Endothelial cell of umbilical vein (primary cell): ENCODE measurements at regions of chr14 and their contacts with region 1.

Region 1: DNA sequence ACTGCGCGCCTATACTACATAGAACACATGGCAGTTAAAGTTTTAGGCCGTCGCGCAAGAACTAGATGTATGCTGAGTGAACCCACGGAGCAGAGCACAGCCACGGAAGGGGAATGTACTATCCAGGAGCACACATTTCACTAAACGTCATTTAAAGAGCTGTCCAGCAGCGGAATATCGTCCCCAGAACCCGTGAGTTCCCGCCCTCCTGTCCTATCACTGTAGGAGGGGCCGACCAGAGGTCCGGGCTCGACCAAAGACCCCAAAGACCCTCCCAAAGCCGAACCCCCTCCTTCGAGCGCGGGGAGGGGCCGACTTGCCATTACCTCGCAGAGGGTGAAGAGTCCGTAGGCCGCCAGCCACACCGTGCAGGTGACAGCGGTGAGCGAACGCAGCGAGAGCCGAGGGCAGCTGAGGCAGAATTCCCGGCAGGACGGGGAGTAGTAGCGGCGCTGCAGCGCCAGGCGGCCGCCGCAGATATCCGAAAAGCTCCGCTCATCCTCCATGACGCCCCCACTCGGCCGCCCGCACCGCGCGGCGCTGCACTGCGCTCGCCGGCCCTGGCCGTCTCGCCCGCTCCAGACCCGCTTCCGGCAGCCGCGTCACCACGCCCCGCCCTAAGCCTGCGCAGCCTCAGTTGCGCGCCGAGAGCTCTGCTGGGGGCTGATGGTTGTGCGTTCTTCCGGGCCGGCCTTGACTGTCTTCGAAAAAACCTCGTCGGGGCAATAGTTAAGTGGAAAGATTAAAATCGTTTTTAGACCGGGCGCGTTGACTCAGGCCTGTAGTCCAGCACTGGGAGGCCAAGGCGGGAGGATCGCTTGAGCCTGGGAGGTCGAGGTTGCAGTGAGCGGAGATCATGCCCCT is at the start of gene PIGH:
- DNase-seq: peak; percentile 88
- H3K4me3 ChIP-seq: peak within 1 kb of the TSS; percentile 33 to 60 (median 54)
- H3K27ac ChIP-seq: no peak within 1 kb of the TSS
- H3K4me1 ChIP-seq: peaks cover 6% of the 10 kb centered on the region
- H3K27me3 ChIP-seq: peaks cover 0 to 4% of the 10 kb centered on the region in 2 experiments
- CTCF ChIP-seq: peak; percentile 41 to 80
- POLR2A ChIP-seq: peak; percentile 80
- total RNA-seq, gene PIGH: 9.9 and 12.3 TPM in 2 replicates

Region 2: GRCh38 chr14:67508956-67509355 is 91.0 kb before region 1 on chr14:
- CTCF ChIA-PET with region 1: no interaction called
- POLR2A ChIA-PET with region 1: no interaction called
- dilution Hi-C with region 1: no loop called
- intact Hi-C with region 1: no loop called
- DNase-seq: no peak
- H3K4me3 ChIP-seq: no peak overlapping the region
- H3K27ac ChIP-seq: no peak overlapping the region
- H3K4me1 ChIP-seq: no peaks in the 10 kb centered on the region
- H3K27me3 ChIP-seq: peaks cover 8 to 27% of the 10 kb centered on the region in 2 experiments
- CTCF ChIP-seq: no peak
- POLR2A ChIP-seq: no peak

Region 3: DNA sequence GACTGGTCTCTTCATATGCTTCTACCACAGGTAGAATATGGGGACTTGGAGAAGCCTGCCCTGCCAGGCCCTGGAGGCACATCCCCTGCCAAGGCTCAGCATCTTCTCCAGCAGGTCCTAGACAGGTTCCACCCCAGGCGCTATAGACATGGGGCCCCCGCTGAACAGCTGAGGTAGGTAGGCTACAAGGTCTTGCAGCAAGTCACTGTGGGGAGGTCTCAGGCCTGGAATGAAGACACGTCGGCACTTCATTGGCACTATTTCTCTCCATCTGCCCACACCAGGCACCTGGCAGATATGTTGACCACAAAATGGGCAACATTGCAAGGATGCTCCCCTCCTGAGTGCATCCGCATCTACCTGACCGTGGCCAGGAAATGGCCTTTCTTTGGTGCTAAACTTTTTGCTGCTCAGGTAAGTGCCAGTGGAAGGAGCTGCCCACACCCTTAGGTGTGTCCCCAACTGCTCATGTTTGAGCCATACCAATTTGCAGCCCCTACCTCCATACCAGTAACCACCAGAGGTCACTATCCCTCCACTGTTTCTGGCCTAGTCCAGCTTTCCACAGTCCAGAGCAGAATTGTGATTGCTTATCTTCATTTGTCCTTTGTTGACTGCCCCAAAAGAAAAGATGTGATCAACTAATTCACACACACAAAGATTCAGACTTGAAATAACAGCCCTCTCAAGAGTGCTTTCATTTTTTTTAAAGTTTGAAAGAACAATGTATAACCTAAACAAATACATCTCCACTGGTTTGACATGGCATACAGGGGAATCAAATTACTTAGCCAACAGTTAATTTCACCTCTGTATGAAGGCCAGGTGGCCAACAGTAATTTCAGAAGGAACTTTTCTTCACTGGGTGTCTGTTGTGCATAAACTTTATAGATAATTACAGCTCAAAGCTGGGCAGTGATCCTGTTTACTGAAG is 16.0 kb before region 1 on chr14:
- CTCF ChIA-PET with region 1: interaction called, 17 read pairs
- POLR2A ChIA-PET with region 1: interaction called, 3 read pairs
- dilution Hi-C with region 1: no loop called
- intact Hi-C with region 1: no loop called
- DNase-seq: peak; percentile 53
- H3K4me3 ChIP-seq: no peak overlapping the region
- H3K27ac ChIP-seq: no peak overlapping the region
- H3K4me1 ChIP-seq: no peaks in the 10 kb centered on the region
- H3K27me3 ChIP-seq: peaks cover 0 to 2% of the 10 kb centered on the region in 2 experiments
- CTCF ChIP-seq: peak; percentile 56 to 76
- POLR2A ChIP-seq: no peak

Region 4: DNA sequence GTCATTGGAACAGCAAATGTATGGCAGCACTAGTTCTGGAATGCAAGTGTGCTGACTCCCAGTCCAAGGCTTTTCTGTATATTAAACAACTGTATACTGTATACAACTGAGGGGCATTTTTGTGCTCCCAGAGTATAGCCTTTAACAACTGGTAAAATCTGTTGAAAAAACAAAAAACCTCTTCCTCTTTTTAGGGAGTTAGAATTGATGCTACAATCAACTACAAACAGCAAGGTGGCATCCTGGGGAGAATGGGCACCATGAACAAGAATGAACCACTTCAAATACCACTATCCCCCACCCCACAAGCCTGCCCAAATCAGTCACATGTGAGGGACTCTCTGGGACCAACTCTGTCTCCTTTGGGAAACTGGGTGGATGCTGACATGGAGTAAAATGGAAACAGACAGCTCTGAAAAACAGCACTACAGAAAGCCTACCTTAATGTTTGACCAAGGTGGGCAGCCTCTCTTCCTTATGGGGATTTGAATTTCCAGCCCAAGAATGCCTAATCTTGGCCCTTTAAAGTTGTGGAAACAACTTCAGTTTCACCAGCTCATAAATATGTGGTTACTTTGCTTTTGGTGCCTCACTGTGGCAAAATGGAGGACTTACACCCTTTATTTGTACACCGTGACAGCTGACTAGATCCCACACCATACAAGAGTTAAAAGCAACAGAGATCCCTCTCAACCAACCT is 67.0 kb after region 1 on chr14:
- CTCF ChIA-PET with region 1: interaction called, 33 read pairs
- POLR2A ChIA-PET with region 1: interaction called, 3 read pairs
- dilution Hi-C with region 1: no loop called
- intact Hi-C with region 1: no loop called
- DNase-seq: peak; percentile 78
- H3K4me3 ChIP-seq: no peak overlapping the region
- H3K27ac ChIP-seq: no peak overlapping the region
- H3K4me1 ChIP-seq: no peaks in the 10 kb centered on the region
- H3K27me3 ChIP-seq: no peaks in the 10 kb centered on the region
- CTCF ChIP-seq: peak; percentile 39 to 50
- POLR2A ChIP-seq: no peak

Region 5: DNA sequence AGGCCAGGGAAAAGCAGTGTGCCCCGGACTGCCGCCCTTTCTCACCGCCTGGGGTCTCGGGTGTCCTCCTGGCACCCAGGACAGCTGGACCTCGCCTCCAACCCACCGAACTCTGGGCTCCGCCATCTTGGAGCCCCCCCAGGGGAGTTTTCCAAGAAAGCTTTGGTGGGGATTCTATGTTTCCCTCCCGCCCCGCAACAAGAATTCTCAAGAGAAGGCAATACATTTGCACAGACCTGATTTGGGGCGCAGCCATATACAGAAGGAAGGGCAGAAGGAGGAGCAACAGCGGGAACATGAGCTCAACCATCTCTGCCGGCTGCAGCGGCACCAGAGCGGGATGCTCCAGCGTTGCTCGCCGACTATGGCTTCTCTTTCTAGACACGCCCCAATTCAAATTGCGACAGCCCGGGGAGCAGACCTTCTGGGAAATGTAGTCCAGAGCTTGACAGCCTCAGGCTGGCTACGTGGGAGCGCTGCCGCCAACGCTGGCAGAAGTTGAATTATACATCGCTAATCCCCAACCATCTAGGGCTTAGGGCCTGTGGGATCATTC is 95.5 kb after region 1 on chr14 and contains the start of gene RDH11:
- CTCF ChIA-PET with region 1: interaction called, 3 read pairs
- POLR2A ChIA-PET with region 1: no interaction called
- dilution Hi-C with region 1: no loop called
- intact Hi-C with region 1: loop called (anchors 1 kb)
- DNase-seq: peak; percentile 89
- H3K4me3 ChIP-seq: peak within 1 kb of the TSS; percentile 77 to 87 (median 78)
- H3K27ac ChIP-seq: peak within 1 kb of the TSS; percentile 61
- H3K4me1 ChIP-seq: peaks cover 10% of the 10 kb centered on the region
- H3K27me3 ChIP-seq: no peaks in the 10 kb centered on the region
- CTCF ChIP-seq: no peak
- POLR2A ChIP-seq: peak; percentile 94
- total RNA-seq, gene RDH11: 79.8 and 90.2 TPM in 2 replicates